Lower leg skin (tissue), 4 donors: ENCODE measurements at regions of chr12 and their contacts with region 1.

Region 1: DNA sequence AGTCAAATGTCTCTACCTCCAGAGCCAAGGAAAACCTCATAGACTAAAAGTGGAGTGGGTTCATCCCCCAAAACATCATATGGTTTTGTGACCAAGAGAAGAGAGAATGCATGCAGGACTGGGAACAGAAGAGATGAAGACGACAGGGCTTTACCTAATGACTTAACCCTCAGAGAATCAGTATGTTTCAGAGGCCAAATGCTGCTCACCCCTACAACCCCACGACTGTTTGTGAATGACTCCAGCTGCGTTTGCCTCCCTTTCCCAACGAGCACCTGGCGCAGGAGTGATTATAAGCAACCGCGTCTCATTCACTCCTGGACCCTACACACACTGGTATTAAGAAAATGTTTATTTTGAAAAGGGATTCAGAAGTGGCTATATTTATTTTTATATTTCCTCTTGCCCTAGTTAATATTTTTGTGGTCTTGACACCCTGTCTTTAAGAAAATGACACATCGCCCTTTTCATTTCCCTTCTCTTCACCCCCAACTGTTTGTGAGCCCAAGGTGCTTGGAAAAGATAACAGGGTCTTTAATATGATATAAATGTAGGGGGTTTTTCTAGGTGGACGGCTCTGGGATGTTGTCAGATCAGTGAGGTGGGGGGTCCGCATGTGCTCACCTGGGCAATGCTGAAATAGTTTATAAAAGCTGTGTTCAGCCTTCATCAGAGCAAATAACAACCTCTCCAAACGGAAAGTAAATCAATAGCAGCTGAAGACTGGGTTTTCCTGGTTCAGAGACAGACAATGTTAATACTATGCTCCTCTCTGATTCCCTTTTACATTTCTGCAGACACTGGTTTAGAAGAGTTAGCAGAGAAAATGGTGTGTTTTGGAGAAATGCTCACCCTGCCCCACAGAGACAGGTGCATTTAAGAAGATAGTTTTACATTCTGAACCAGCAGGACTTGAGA is 77.7 kb downstream of the SLC15A4 start:
- DNase-seq: no peak
- H3K4me3 ChIP-seq: no peak overlapping the region
- CTCF ChIP-seq: no peak
- POLR2A ChIP-seq: no peak

Region 2: DNA sequence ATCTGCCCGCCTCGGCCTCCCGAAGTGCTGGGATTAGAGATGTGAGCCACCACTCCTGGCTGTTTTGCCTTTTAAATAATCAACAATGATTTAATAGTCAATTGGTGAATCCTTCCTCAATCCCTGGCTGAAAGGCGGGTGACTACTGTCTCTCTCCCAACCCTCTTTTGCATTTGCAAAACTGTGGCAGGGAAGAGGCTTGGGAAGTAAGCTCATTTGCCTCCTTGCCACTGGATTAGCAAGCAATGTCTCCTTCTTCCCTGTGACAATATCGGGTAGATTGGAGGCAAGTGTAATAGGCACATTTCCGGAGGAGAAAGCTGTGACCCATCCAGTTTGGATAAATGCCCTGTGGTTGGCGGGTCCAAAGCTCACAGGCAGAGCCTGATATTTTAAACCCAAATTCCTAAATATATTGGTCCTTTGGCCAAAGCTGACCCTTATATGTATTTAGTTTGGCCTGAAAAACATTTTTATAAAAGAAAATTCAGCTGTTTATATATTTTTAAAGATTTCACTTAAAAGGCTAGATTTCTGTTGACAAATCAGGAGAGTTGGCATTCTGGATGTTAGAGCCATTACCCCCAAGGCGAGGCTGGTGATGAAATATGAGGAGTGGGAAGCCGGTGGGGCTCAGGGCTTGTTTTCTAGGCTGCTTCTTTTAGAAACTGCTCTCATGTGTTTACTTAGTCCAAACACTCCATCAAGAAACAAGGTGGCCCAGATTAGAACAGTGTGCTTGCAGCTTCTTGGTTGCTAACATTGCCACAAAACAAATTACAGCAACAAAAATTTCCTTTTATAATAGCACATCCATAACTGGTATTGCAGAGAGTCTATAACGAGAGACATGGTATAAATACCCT is 1125.9 kb before region 1 on chr12:
- intact Hi-C with region 1: loop called (anchors 5 kb)
- DNase-seq: no peak
- H3K4me3 ChIP-seq: no peak overlapping the region
- CTCF ChIP-seq: no peak
- POLR2A ChIP-seq: no peak

Region 3: GRCh38 chr12:129304529-129304928 is 558.5 kb after region 1 on chr12:
- intact Hi-C with region 1: no loop called
- DNase-seq: no peak
- H3K4me3 ChIP-seq: no peak overlapping the region
- CTCF ChIP-seq: no peak
- POLR2A ChIP-seq: no peak